ENCODE measurements at regions of chr6 and their contacts with region 1.

Region 1: DNA sequence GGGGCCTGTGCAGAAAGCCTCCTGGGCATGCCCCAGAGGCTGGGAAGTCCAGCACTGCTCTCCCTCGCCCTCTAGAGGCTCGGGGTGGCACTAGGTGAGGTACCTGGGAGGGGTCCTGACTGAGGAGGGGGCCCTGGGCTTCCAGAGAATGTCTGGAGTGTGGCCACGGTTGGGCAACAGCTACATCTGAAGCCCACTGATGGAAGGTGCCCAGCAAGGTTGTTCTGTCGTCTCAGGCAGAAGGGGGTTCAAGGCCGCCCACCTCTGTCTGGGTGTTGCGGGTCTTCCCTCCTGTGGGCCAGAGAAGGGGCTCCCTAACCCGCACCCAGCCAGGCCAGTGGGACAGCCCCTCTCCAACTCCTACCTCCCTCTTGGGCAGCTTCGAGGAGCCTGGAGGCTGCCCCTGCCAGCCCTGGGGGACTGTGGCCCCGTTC is 11.4 kb upstream of the VEGFA start:
- DNase-seq: no peak
- ATAC-seq: peak; percentile 85
- H3K4me3 ChIP-seq: no peak overlapping the region
- H3K27ac ChIP-seq: no peak overlapping the region
- H3K4me1 ChIP-seq: peaks cover 10% of the 10 kb centered on the region
- H3K27me3 ChIP-seq: no peaks in the 10 kb centered on the region
- CTCF ChIP-seq: peak; percentile 67 to 88 (median 84)
- EP300 ChIP-seq: no peak
- POLR2A ChIP-seq: no peak
- RAD21 ChIP-seq: peak; percentile 62

Region 2: DNA sequence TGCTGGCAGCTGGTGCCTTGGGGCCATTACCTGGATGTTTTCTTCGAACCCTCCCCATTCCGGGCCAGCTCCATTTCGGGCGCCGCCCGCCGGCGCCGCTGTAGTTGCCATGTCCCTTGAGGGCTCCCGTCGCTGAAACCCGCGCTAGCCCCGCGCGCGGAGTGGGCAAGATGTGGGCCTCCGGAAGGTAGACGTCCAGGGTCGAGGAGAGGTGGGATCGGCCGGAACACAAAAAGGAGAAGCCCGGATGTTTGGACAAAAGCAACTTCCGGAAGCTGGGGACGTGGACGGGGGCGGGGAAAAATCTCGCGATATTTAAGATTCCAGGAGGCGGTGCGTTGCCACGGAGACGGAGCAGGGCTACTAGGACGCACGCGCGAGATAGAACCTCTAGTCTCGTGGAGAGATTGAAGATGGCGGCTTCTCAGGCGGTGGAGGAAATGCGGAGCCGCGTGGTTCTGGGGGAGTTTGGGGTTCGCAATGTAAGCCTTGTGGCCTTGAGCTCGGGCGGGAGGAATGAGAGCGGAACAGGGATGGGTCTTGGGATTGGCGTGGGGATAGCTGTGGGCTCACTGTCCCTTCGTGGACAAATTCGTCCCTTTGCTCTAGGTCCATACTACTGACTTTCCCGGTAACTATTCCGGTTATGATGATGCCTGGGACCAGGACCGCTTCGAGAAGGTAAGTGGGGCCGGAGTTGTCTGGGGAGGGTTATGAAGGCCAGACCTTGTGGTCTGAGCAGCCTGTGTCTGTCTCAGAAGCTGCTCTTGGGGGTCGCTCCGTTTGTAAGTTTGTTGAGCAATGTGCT is 241.7 kb before region 1 on chr6 and contains the starts of genes POLR1C and YIPF3:
- CTCF ChIA-PET with region 1: no interaction called
- POLR2A ChIA-PET with region 1: no interaction called
- RAD21 ChIA-PET with region 1: no interaction called
- SMC1A ChIA-PET with region 1: no interaction called
- in situ Hi-C with region 1: no loop called
- intact Hi-C with region 1: no loop called
- DNase-seq: peak; percentile 95
- ATAC-seq: peak; percentile 95
- H3K4me3 ChIP-seq: peak within 1 kb of the TSS; percentile 80
- H3K27ac ChIP-seq: peak within 1 kb of the TSS; percentile 76
- H3K4me1 ChIP-seq: peaks cover 6% of the 10 kb centered on the region
- H3K27me3 ChIP-seq: no peaks in the 10 kb centered on the region
- CTCF ChIP-seq: no peak
- EP300 ChIP-seq: 0 out of 4 replicates have a peak, but pooled peaks of 1 of the 2 experiments have one; percentile 26
- POLR2A ChIP-seq: peak; percentile 96
- RAD21 ChIP-seq: no peak
- polyA plus RNA-seq, gene POLR1C: 164 to 180 TPM
- polyA plus RNA-seq, gene YIPF3: 25.0 to 29.8 TPM

Region 3: DNA sequence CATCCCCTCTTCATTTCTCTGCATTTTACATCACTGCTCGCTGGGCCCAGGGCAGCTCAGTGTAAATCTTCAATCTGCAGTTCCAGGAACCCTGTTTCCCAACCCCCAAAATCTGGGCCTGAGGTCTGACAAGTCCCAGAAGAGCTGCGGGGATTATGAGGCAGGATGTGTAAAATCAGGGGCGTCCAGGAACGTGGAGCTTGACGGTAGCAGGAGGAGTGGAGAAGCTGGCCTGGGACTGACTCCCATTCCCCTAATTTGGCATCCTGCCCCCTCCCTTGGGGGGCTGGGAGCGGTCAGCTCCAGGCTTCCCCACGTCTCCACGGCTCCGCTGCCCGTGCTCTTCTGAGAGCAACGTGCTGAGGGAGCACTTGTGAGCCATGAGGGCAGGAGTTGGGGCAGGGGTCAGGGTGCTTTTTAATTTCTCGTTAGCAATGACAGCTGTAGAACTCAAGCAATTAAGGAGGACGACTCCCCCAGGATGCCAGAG is 12.0 kb before region 1 on chr6:
- CTCF ChIA-PET with region 1: interaction called, 13 read pairs
- POLR2A ChIA-PET with region 1: no interaction called
- RAD21 ChIA-PET with region 1: no interaction called
- SMC1A ChIA-PET with region 1: interaction called, 4 read pairs
- in situ Hi-C with region 1: no loop called
- intact Hi-C with region 1: no loop called
- DNase-seq: no peak
- ATAC-seq: no peak
- H3K4me3 ChIP-seq: no peak overlapping the region
- H3K27ac ChIP-seq: no peak overlapping the region
- H3K4me1 ChIP-seq: no peaks in the 10 kb centered on the region
- H3K27me3 ChIP-seq: no peaks in the 10 kb centered on the region
- CTCF ChIP-seq: no peak
- EP300 ChIP-seq: no peak
- POLR2A ChIP-seq: no peak
- RAD21 ChIP-seq: no peak

Region 4: GRCh38 chr6:44312901-44313788 is 554.5 kb after region 1 on chr6 and contains the start of gene AARS2:
- CTCF ChIA-PET with region 1: no interaction called
- POLR2A ChIA-PET with region 1: no interaction called
- RAD21 ChIA-PET with region 1: no interaction called
- SMC1A ChIA-PET with region 1: no interaction called
- in situ Hi-C with region 1: no loop called
- intact Hi-C with region 1: no loop called
- DNase-seq: peak; percentile 49
- ATAC-seq: peak; percentile 96
- H3K4me3 ChIP-seq: peak within 1 kb of the TSS; percentile 97
- H3K27ac ChIP-seq: peak within 1 kb of the TSS; percentile 67
- H3K4me1 ChIP-seq: peaks cover 5% of the 10 kb centered on the region
- H3K27me3 ChIP-seq: no peaks in the 10 kb centered on the region; a peak in 1 of 4 replicates
- CTCF ChIP-seq: peak; percentile 99; a peak in 5 of 6 replicates
- EP300 ChIP-seq: no peak
- POLR2A ChIP-seq: peak; percentile 99
- RAD21 ChIP-seq: no peak
- polyA plus RNA-seq, gene AARS2: 0.71 to 0.75 TPM